ENCODE measurements at regions of chr3 and their contacts with region 1.

Region 1: GRCh38 chr3:55180936-55181535 is 253.2 kb upstream of the LRTM1 start:
- DNase-seq: peak in 1 of 2 donors; percentile 36
- ATAC-seq: no peak
- H3K4me3 ChIP-seq: no peak overlapping the region
- H3K27ac ChIP-seq: no peak overlapping the region
- H3K4me1 ChIP-seq: no peaks in the 10 kb centered on the region
- H3K27me3 ChIP-seq: peaks cover 0 to 18% (median 11%) of the 10 kb centered on the region in 7 donors
- CTCF ChIP-seq: peak; percentile 57 to 83 (median 70)

Region 2: DNA sequence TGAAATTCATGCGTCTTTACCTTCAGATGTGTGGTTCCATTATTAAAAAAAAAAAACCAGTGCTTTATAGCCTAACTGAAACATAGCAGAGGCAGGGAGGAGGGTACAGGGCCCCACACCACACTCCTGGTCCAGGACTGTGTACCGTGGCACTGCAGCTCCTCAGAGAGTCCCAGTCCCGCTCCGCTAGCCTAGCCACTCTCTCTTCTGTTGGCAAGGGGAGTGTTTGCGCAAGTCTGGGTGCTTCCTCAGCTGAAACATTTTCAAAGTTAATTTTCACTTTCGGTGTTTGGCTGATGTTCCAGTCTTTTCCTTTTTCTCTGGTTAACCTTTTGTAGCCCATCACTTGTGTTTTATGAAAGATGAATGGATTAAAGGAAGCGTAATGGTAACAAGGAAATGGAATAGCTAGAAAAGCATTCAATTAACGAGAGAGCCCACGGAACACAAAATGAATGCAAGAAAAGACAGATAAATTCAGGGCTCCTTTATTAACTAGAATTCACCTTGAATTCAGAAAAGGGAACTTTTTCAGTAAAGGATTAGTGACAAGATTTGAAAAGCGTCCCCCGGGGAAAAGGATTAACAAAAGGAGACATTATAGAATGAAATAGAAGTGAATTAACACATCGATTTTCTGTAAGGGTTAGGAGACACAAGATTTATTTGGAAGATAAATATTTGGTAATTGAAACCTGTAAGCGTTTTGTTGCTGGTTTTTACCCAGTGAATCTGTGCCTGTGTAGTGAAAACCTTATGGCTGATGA is 881.7 kb before region 1 on chr3:
- intact Hi-C with region 1: no loop called
- DNase-seq: no peak
- ATAC-seq: no peak
- H3K4me3 ChIP-seq: no peak overlapping the region
- H3K27ac ChIP-seq: no peak overlapping the region
- H3K4me1 ChIP-seq: no peaks in the 10 kb centered on the region
- H3K27me3 ChIP-seq: no peaks in the 10 kb centered on the region
- CTCF ChIP-seq: no peak

Region 3: GRCh38 chr3:54859184-54859583 is 321.9 kb before region 1 on chr3:
- intact Hi-C with region 1: loop called in 7 of 10 experiments (anchors 2 to 10 kb)
- DNase-seq: no peak
- ATAC-seq: no peak
- H3K4me3 ChIP-seq: no peak overlapping the region
- H3K27ac ChIP-seq: no peak overlapping the region
- H3K4me1 ChIP-seq: peaks cover 0 to 33% (median 8%) of the 10 kb centered on the region in 9 donors
- H3K27me3 ChIP-seq: no peaks in the 10 kb centered on the region
- CTCF ChIP-seq: no peak

Region 4: DNA sequence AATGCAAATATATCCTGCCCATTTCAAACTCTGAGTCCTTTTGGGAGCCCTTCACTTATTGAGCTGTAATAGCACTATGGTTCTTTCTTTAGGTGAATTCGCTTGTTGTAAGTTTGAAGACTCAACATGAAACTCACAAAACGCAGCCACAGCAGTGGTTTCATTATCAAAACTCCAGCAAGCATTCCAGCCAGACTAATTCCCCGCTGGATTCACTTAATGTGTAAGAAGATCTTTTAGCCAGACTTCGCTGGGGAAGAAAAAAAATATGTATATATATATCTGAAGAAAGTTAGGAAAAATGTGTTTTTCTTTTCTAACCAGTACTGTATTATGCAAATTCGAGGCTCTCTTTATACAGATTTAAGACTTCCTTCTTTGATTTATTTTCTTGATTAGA is 65.0 kb after region 1 on chr3:
- intact Hi-C with region 1: no loop called
- DNase-seq: no peak
- ATAC-seq: no peak
- H3K4me3 ChIP-seq: peak overlapping the region in 1 of 10 donors; percentile 5
- H3K27ac ChIP-seq: no peak overlapping the region
- H3K4me1 ChIP-seq: no peaks in the 10 kb centered on the region
- H3K27me3 ChIP-seq: peaks cover 0 to 7% (median 0%) of the 10 kb centered on the region in 7 donors
- CTCF ChIP-seq: no peak

Region 5: DNA sequence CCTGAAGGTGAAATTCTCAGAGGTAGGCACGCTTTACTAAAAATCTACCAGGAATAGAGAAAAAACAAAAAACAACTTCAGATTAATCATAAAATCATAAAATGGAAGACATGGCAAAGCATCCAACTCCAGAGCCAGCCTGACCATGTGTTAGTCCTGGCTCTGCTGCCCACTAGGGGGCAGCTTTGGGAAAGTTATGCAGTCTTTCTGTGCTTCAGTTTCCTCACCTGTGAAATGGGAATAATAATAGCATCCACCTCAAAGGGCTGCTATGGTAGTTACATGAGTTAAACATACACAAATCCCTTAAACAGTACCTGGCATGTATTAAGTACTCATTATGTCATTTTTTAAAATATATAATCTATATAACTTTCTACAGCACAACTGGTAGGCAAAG is 253.8 kb after region 1 on chr3:
- intact Hi-C with region 1: no loop called
- DNase-seq: no peak
- ATAC-seq: no peak
- H3K4me3 ChIP-seq: no peak overlapping the region
- H3K27ac ChIP-seq: no peak overlapping the region
- H3K4me1 ChIP-seq: no peaks in the 10 kb centered on the region
- H3K27me3 ChIP-seq: peaks cover 0 to 15% (median 6%) of the 10 kb centered on the region in 7 donors
- CTCF ChIP-seq: peak in 4 of 9 donors; percentile 10 to 47 (median 26)

Region 6: DNA sequence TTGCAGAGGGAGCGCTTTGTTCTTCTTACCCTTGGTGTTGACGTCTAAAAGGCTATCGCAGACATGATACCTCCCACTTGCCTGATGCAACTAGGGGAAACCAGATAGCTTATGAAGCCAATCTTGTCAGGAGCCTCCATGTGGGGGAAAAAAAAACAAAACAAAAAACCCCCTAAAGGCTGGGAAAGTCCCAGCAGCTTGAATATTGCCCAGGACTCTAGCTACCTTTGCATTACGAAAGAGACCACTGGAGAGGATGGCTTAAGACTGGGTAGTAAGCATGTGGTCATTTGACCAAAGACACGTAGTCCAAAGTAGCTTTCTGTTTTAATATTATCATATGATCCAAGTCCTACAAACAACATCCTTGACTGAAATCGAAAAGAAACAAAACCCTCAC is 426.8 kb after region 1 on chr3:
- intact Hi-C with region 1: no loop called
- DNase-seq: no peak
- ATAC-seq: no peak
- H3K4me3 ChIP-seq: no peak overlapping the region
- H3K27ac ChIP-seq: no peak overlapping the region
- H3K4me1 ChIP-seq: no peaks in the 10 kb centered on the region
- H3K27me3 ChIP-seq: peaks cover 0 to 7% (median 1%) of the 10 kb centered on the region in 7 donors
- CTCF ChIP-seq: no peak

Measured in heart right ventricle (tissue), 16 donors.